ENCODE measurements at regions of chr12 and their contacts with region 1.

Region 1: DNA sequence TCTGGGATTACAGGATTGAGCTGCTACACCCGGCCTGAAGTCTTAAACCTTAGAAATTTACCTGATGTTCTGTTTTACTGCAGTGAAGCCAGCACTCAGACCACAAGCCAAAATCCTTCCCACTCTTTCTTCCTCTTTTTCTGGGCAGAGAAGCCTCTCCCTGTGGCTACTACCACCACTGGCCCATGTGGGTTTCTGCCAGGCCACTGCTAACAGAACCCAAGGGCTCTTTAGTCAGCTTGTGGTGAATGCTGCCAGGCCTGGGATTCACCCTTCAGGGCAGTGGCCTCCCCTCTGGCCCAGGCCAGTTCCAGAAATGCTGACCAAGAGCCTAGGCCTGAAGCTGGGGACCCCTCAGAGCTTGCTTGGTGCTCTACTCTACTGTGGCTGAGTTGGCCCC is 35.3 kb downstream of the GAS2L3 start:
- DNase-seq: peak; percentile 53 to 65 (median 62)
- H3K4me3 ChIP-seq: no peak overlapping the region
- H3K4me3 Mint-ChIP-seq: no peak overlapping the region
- H3K27ac ChIP-seq: peak overlapping the region; percentile 34 to 52
- H3K27ac Mint-ChIP-seq: peak overlapping the region in 6 of 7 donors; percentile 61 to 85 (median 82)
- H3K4me1 ChIP-seq: peaks cover 34 to 38% of the 10 kb centered on the region in 2 donors
- H3K4me1 Mint-ChIP-seq: peaks cover 45% of the 10 kb centered on the region
- H3K27me3 ChIP-seq: no peaks in the 10 kb centered on the region
- H3K27me3 Mint-ChIP-seq: no peaks in the 10 kb centered on the region
- CTCF ChIP-seq: no peak

Region 2: GRCh38 chr12:100573292-100574186 is 35.2 kb before region 1 on chr12 and contains the start of gene GAS2L3:
- intact Hi-C with region 1: loop called in 1 of 2 experiments (anchors 5 kb)
- DNase-seq: peak; percentile 92 to 94 (median 93)
- H3K4me3 ChIP-seq: peak within 1 kb of the TSS; percentile 60 to 97 (median 82)
- H3K4me3 Mint-ChIP-seq: peak within 1 kb of the TSS; percentile 94 to 97
- H3K27ac ChIP-seq: peak within 1 kb of the TSS; percentile 85 to 89
- H3K27ac Mint-ChIP-seq: peak within 1 kb of the TSS; percentile 88 to 97 (median 95)
- H3K4me1 ChIP-seq: peaks cover 19 to 28% of the 10 kb centered on the region in 2 donors
- H3K4me1 Mint-ChIP-seq: peaks cover 17% of the 10 kb centered on the region
- H3K27me3 ChIP-seq: no peaks in the 10 kb centered on the region
- H3K27me3 Mint-ChIP-seq: peaks cover 0 to 1% (median 0%) of the 10 kb centered on the region in 3 donors
- CTCF ChIP-seq: no peak
- polyA plus RNA-seq, gene GAS2L3: 0.53 to 1.6 (median 1.1) TPM

Measured in CD14-positive monocyte (primary cell).